Motor neuron (in vitro differentiated cells): ENCODE measurements at regions of chr17 and their contacts with region 1.

Region 1: GRCh38 chr17:66727639-66728570 is 107.0 kb upstream of the CACNG5 start:
- ATAC-seq: peak; percentile 24 to 91 (median 80)
- H3K4me3 ChIP-seq: no peak overlapping the region
- H3K27ac ChIP-seq: no peak overlapping the region
- H3K4me1 ChIP-seq: peaks cover 27 to 31% of the 10 kb centered on the region in 2 donors

Region 2: DNA sequence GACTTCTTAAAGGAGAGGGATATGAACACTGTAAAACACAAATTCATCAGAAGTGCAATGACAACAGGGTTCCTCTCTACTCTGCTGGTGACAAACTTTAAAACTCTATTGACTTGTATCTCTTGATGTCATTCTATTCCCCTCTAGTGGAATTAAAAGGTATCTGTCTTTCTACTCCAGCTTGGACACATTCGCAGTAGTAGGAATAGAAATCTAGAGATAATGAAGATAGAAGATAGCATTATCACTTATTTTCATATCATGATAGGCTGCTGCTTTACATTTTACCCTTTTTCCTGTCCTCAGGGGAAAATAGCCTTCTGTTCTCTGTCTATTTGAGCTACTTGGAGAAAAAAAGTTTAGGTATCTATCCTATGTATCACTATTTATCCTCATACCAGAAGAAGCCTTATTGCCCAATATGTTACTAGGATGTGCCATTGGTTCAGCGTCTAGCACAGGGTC is 102.6 kb before region 1 on chr17:
- in situ Hi-C with region 1: no loop called
- ATAC-seq: peak in 5 of 8 experiments; percentile 55 to 79 (median 57)
- H3K4me3 ChIP-seq: no peak overlapping the region
- H3K27ac ChIP-seq: no peak overlapping the region
- H3K4me1 ChIP-seq: no peaks in the 10 kb centered on the region

Region 3: DNA sequence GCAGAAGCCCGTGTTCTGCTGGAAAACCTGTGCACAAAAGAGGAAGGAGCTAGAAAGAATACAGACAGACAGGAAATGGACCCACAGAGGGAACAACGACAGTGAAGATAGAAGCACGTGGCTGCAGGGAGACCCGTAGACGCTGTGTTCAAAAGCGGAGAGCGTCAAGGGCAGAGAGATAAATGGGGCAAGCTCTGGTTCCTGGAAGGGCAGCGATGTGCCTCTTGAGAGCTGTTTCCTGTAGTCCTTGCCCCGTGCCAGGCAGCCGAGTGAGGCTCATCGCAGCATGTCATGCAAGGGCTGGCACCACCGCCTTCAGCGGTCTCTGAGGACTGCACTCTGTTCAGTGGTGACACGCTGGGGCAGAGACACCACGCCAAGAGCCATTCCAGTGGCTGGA is 63.4 kb after region 1 on chr17:
- in situ Hi-C with region 1: no loop called
- ATAC-seq: peak in 5 of 8 experiments; percentile 43 to 60 (median 58)
- H3K4me3 ChIP-seq: no peak overlapping the region
- H3K27ac ChIP-seq: no peak overlapping the region
- H3K4me1 ChIP-seq: peaks cover 26 to 32% of the 10 kb centered on the region in 2 donors

Region 4: GRCh38 chr17:66885395-66885794 is 157.5 kb after region 1 on chr17:
- in situ Hi-C with region 1: loop called in 2 of 9 experiments (anchors 10 to 25 kb)
- ATAC-seq: no peak
- H3K4me3 ChIP-seq: no peak overlapping the region
- H3K27ac ChIP-seq: no peak overlapping the region
- H3K4me1 ChIP-seq: no peaks in the 10 kb centered on the region

Region 5: DNA sequence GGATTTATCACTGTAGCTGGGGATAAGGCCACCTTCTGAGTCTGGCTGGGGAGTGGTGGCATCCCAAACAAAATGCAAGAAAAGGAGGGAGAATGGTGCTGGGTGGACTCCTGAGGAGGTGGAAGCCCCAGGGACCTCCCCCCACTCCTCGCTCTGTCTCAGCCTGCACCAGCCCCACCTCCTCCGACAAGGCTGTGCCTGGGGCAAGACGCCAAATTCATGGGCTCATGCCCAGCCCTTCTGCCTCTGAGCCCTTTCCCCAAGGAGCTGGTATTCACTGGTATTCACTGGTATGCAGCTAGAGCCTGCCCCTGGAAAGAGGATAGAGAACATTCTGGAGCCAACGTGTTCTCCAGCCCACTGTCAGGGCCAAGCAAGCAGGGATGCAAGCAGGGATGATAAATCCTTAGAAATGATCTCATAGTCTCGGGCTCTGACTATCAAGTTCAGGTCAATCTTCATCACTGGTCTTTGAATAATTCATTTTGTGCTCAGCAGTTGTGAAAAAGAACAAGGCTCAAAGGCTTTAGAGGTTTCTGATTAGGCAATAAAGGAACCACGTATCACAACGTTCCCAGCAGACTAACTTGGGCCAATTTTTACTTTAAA is 164.2 kb after region 1 on chr17:
- in situ Hi-C with region 1: loop called in 2 of 9 experiments (anchors 10 to 25 kb)
- ATAC-seq: peak; percentile 96 to 99 (median 98)
- H3K4me3 ChIP-seq: no peak overlapping the region
- H3K27ac ChIP-seq: peak overlapping the region; percentile 62 to 79
- H3K4me1 ChIP-seq: peaks cover 6 to 13% of the 10 kb centered on the region in 2 donors

Region 6: DNA sequence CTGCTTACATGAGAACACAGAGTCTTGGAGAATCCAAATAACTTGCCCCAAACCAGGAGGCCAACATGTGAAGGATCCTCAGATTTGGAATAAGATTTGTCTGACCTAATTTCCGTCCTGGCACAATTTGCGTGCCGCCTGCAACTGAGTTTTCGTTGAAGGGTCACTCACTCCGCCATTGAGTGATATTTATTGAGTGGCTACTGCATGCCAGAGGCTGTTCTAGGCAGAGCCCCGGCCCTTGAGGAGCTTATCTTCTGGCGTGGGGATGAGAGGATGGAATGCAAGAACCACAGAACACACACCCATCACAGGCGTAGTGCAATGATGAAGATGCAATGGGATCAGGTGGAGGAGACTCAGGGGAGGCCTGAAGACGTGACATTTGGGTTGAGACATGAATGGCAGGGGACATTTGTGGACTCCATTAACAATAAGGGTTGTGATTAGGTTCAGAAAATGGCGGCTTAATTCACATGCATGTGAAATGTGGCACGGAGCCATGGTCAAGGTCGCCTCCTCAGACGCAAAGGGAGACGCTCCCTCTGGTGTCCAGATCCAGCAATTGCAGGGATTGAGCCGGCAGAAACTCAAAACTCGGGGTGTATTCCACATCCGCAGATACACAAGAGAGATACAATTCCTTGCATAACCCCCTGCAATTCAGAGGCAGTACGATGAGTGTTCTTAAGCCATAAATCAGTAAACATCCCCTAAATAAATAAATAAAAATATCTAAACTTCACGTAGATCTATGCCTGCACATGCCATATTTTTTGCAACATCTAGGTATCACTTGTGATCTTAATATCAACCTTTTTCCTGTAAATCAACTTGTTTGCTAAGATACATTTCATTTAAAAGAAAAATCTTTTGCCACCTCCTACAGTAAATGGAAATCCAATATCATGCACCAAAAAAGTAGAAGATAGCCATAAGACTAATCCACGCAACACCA is 178.7 kb after region 1 on chr17:
- in situ Hi-C with region 1: loop called in 5 of 9 experiments (anchors 5 to 25 kb)
- ATAC-seq: peak in 7 of 8 experiments; percentile 33 to 69 (median 60)
- H3K4me3 ChIP-seq: no peak overlapping the region
- H3K27ac ChIP-seq: no peak overlapping the region
- H3K4me1 ChIP-seq: peaks cover 21 to 28% of the 10 kb centered on the region in 2 donors

Region 7: GRCh38 chr17:67615011-67615561 is 887.2 kb after region 1 on chr17:
- in situ Hi-C with region 1: no loop called
- ATAC-seq: peak in 1 of 8 experiments; percentile 8
- H3K4me3 ChIP-seq: no peak overlapping the region
- H3K27ac ChIP-seq: no peak overlapping the region
- H3K4me1 ChIP-seq: peaks cover 0 to 6% of the 10 kb centered on the region in 2 donors